Ascending aorta (tissue), 2 donors: ENCODE measurements at regions of chr9 and their contacts with region 1.

Region 1: GRCh38 chr9:136051517-136052432 is 43.3 kb downstream of the NACC2 start:
- DNase-seq: peak in 1 of 2 donors; percentile 85
- H3K4me3 ChIP-seq: peak overlapping the region; percentile 37 to 65
- H3K27ac ChIP-seq: peak overlapping the region; percentile 44 to 79
- H3K4me1 ChIP-seq: peaks cover 27 to 45% of the 10 kb centered on the region in 2 donors
- H3K27me3 ChIP-seq: no peaks in the 10 kb centered on the region
- CTCF ChIP-seq: no peak

Region 2: GRCh38 chr9:135961277-135961705 is 90.5 kb before region 1 on chr9 and contains the start of gene UBAC1:
- intact Hi-C with region 1: loop called (anchors 5 kb)
- DNase-seq: peak; percentile 86 to 98
- H3K4me3 ChIP-seq: peak within 1 kb of the TSS; percentile 67 to 96
- H3K27ac ChIP-seq: peak within 1 kb of the TSS; percentile 73 to 91
- H3K4me1 ChIP-seq: peaks cover 3 to 12% of the 10 kb centered on the region in 2 donors
- H3K27me3 ChIP-seq: no peaks in the 10 kb centered on the region
- CTCF ChIP-seq: peak in 2 of 3 experiments; percentile 13 to 70
- total RNA-seq, gene UBAC1: 31.0 TPM

Region 3: DNA sequence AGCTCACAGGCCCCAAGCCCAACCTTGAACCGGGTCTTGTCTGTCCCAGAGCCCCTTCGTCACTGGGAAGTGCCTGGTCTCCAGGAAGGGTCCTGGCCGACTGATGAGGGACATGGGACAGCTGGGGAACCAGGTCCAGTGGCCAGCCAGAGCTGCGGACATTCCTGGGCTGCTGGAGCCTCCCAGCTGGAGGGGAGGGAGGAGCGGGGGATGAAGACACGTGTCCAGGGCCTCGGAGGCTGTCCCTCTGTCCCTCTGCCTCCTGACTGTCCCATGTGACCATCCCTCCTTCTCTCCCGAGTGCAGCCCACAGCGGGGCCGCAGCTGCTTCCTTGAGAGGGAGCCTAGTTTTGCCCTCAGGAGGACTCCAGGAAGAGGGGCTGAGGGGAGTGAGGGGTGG is 48.9 kb before region 1 on chr9:
- intact Hi-C with region 1: no loop called
- DNase-seq: no peak
- H3K4me3 ChIP-seq: no peak overlapping the region
- H3K27ac ChIP-seq: no peak overlapping the region
- H3K4me1 ChIP-seq: peaks cover 0 to 7% of the 10 kb centered on the region in 2 donors
- H3K27me3 ChIP-seq: no peaks in the 10 kb centered on the region
- CTCF ChIP-seq: no peak

Region 4: GRCh38 chr9:136093995-136094881 is 42.5 kb after region 1 on chr9:
- intact Hi-C with region 1: loop called (anchors 2 kb)
- DNase-seq: peak in 1 of 2 donors; percentile 91
- H3K4me3 ChIP-seq: peak overlapping the region; percentile 91 to 94
- H3K27ac ChIP-seq: peak overlapping the region; percentile 91 to 98
- H3K4me1 ChIP-seq: peaks cover 22 to 48% of the 10 kb centered on the region in 2 donors
- H3K27me3 ChIP-seq: no peaks in the 10 kb centered on the region
- CTCF ChIP-seq: peak in 2 of 3 experiments; percentile 9 to 19

Region 5: GRCh38 chr9:136109351-136110081 is 57.7 kb after region 1 on chr9:
- intact Hi-C with region 1: loop called (anchors 1 kb)
- DNase-seq: peak; percentile 82 to 98
- H3K4me3 ChIP-seq: peak overlapping the region; percentile 43 to 58
- H3K27ac ChIP-seq: peak overlapping the region; percentile 59 to 82
- H3K4me1 ChIP-seq: peaks cover 21 to 30% of the 10 kb centered on the region in 2 donors
- H3K27me3 ChIP-seq: no peaks in the 10 kb centered on the region
- CTCF ChIP-seq: peak in 2 of 3 experiments; percentile 22 to 27